ENCODE measurements at regions of chr17 and their contacts with region 1.

Region 1: GRCh38 chr17:37643118-37643766 is at the start of gene DDX52:
- DNase-seq: peak; percentile 71 to 86
- ATAC-seq: peak; percentile 97 to 98
- H3K4me3 ChIP-seq: peak within 1 kb of the TSS; percentile 78 to 84 (median 78)
- H3K27ac ChIP-seq: peak within 1 kb of the TSS; percentile 86 to 90 (median 88)
- H3K4me1 ChIP-seq: peaks cover 12 to 21% of the 10 kb centered on the region in 2 donors
- H3K27me3 ChIP-seq: peaks cover 2 to 10% (median 3%) of the 10 kb centered on the region in 3 donors
- CTCF ChIP-seq: no peak
- POLR2A ChIP-seq: peak; percentile 54 to 57
- total RNA-seq, gene DDX52: 13.1 to 16.9 (median 14.7) TPM

Region 2: GRCh38 chr17:37174205-37174604 is 469.0 kb before region 1 on chr17:
- in situ Hi-C with region 1: no loop called
- intact Hi-C with region 1: no loop called
- DNase-seq: no peak
- ATAC-seq: no peak
- H3K4me3 ChIP-seq: no peak overlapping the region
- H3K27ac ChIP-seq: no peak overlapping the region
- H3K4me1 ChIP-seq: no peaks in the 10 kb centered on the region
- H3K27me3 ChIP-seq: no peaks in the 10 kb centered on the region
- CTCF ChIP-seq: no peak
- POLR2A ChIP-seq: no peak

Region 3: GRCh38 chr17:37609170-37610040 is 33.8 kb before region 1 on chr17 and contains the start of gene SYNRG:
- in situ Hi-C with region 1: no loop called
- intact Hi-C with region 1: loop called (anchors 2 kb)
- DNase-seq: peak; percentile 90 to 93
- ATAC-seq: peak; percentile 97 to 98
- H3K4me3 ChIP-seq: peak within 1 kb of the TSS; percentile 79 to 98 (median 86)
- H3K27ac ChIP-seq: peak within 1 kb of the TSS; percentile 90 to 98 (median 91)
- H3K4me1 ChIP-seq: peaks cover 28 to 30% of the 10 kb centered on the region in 2 donors
- H3K27me3 ChIP-seq: no peaks in the 10 kb centered on the region
- CTCF ChIP-seq: peak in 3 of 5 experiments; percentile 8 to 45 (median 14)
- POLR2A ChIP-seq: peak; percentile 79 to 84
- total RNA-seq, gene SYNRG: 16.0 to 25.0 (median 21.9) TPM

Region 4: GRCh38 chr17:37698132-37698615 is 54.9 kb after region 1 on chr17:
- in situ Hi-C with region 1: no loop called
- intact Hi-C with region 1: no loop called
- DNase-seq: no peak
- ATAC-seq: no peak
- H3K4me3 ChIP-seq: no peak overlapping the region
- H3K27ac ChIP-seq: no peak overlapping the region
- H3K4me1 ChIP-seq: no peaks in the 10 kb centered on the region
- H3K27me3 ChIP-seq: no peaks in the 10 kb centered on the region
- CTCF ChIP-seq: no peak
- POLR2A ChIP-seq: no peak

Measured in gastrocnemius medialis (tissue), 4 donors.